MCF 10A (cell line): ENCODE measurements at regions of chr11 and their contacts with region 1.

Region 1: GRCh38 chr11:47213985-47214564 is 699 bp upstream of the DDB2 start:
- DNase-seq: peak; percentile 97
- H3K4me3 Mint-ChIP-seq: peak overlapping the region; percentile 76
- H3K27ac Mint-ChIP-seq: peak overlapping the region; percentile 91
- H3K4me1 Mint-ChIP-seq: peaks cover 12% of the 10 kb centered on the region
- H3K27me3 Mint-ChIP-seq: no peaks in the 10 kb centered on the region
- CTCF ChIP-seq: no peak

Region 2: DNA sequence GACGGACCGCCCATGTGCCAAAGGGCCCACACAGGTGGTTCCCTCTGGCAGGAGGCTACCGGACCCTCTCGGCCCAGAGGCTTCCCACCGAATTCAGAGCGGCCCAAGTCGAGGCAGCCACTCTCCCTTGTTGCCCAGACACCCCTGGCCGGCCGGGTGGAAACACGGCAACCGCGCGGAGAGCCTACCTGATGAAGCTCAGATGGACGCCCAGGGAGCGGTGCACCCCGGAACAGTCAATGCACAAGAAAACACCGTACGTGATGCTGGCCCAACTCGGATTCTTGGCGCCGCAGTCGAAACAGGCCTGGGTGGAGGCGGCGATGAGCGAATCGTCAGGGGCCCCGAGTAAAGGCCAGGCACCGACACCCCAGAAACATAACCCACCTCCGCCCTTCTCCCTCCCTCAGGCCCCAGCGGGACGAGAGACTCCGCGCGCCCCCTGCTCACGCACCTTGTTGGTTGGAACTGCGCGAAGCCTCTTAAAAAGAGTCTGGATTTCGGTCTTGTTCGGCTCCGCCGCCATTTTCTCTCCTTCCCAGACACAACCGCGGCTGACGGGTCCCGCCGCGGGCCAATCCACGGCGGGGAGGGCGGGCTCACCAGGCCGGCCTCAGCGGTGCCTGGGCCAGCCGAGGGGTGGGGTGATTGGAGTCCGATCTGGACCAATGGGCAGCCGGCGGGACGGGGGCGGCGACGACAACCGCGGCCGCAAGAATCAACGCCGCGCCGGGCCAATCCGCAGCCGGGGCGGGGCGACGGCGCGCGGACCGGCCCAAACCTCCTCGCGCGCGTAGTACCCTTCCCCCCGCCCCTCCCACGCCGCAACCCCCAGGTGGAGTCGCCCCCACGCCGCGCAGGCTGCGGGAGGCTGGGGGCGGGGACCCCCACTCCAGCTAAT is 37.5 kb before region 1 on chr11 and contains the start of gene ARFGAP2:
- CTCF ChIA-PET with region 1: interaction called, 55 read pairs
- POLR2A ChIA-PET with region 1: interaction called, 72 read pairs
- intact Hi-C with region 1: loop called (anchors 1 kb)
- DNase-seq: peak; percentile 95
- H3K4me3 Mint-ChIP-seq: peak within 1 kb of the TSS; percentile 93
- H3K27ac Mint-ChIP-seq: peak within 1 kb of the TSS; percentile 99
- H3K4me1 Mint-ChIP-seq: peaks cover 17% of the 10 kb centered on the region
- H3K27me3 Mint-ChIP-seq: no peaks in the 10 kb centered on the region
- CTCF ChIP-seq: no peak
- total RNA-seq, gene ARFGAP2: 78.0 and 81.4 TPM in 2 replicates

Region 3: DNA sequence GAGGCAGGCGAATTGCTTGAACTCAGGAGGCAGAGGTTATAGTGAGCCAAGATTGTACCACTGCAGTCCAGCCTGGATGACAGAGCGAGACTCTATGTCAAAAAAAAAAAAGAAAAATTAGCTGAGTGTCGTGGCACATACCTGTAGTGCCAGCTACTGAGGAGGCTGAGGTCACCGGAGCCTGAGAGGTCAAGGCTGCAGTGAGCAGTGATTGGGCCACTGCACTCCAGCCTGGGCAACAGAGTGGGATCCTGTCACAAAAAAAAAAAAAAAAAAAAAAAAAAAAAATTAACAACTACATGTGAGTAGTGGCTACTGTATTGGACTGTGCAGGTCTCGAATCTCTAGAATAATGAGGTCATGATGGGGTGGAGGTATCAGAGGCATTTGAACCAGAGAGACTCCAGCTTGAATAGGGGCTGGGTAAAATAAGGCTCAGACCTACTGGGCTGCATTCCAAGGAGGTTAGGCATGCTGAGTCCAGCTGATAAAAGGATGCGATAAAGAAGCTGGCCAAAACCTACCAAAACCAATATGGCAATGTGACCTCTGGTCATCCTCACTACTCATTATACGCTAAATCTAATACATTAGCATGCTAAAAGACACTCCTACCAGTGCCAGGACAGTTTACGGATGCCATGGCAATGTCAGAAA is 22.1 kb before region 1 on chr11:
- CTCF ChIA-PET with region 1: interaction called, 23 read pairs
- POLR2A ChIA-PET with region 1: interaction called, 199 read pairs
- intact Hi-C with region 1: no loop called
- DNase-seq: no peak
- H3K4me3 Mint-ChIP-seq: no peak overlapping the region
- H3K27ac Mint-ChIP-seq: no peak overlapping the region
- H3K4me1 Mint-ChIP-seq: peaks cover 13% of the 10 kb centered on the region
- H3K27me3 Mint-ChIP-seq: no peaks in the 10 kb centered on the region
- CTCF ChIP-seq: no peak

Region 4: GRCh38 chr11:47241841-47242301 is 27.8 kb after region 1 on chr11:
- CTCF ChIA-PET with region 1: interaction called, 3 read pairs
- POLR2A ChIA-PET with region 1: interaction called, 40 read pairs
- intact Hi-C with region 1: no loop called
- DNase-seq: peak; percentile 18
- H3K4me3 Mint-ChIP-seq: no peak overlapping the region
- H3K27ac Mint-ChIP-seq: peak overlapping the region; percentile 2
- H3K4me1 Mint-ChIP-seq: peaks cover 13% of the 10 kb centered on the region
- H3K27me3 Mint-ChIP-seq: no peaks in the 10 kb centered on the region
- CTCF ChIP-seq: no peak

Region 5: GRCh38 chr11:47269002-47269828 is 55.1 kb after region 1 on chr11:
- CTCF ChIA-PET with region 1: interaction called, 3 read pairs
- POLR2A ChIA-PET with region 1: interaction called, 8 read pairs
- intact Hi-C with region 1: loop called (anchors 5 kb)
- DNase-seq: peak; percentile 84
- H3K4me3 Mint-ChIP-seq: peak overlapping the region; percentile 85
- H3K27ac Mint-ChIP-seq: peak overlapping the region; percentile 78
- H3K4me1 Mint-ChIP-seq: peaks cover 16% of the 10 kb centered on the region
- H3K27me3 Mint-ChIP-seq: no peaks in the 10 kb centered on the region
- CTCF ChIP-seq: no peak

Region 6: GRCh38 chr11:47495011-47495855 is 281.2 kb after region 1 on chr11:
- CTCF ChIA-PET with region 1: no interaction called
- POLR2A ChIA-PET with region 1: no interaction called
- intact Hi-C with region 1: no loop called
- DNase-seq: peak; percentile 50
- H3K4me3 Mint-ChIP-seq: no peak overlapping the region
- H3K27ac Mint-ChIP-seq: no peak overlapping the region
- H3K4me1 Mint-ChIP-seq: peaks cover 9% of the 10 kb centered on the region
- H3K27me3 Mint-ChIP-seq: no peaks in the 10 kb centered on the region
- CTCF ChIP-seq: no peak